T-cell (primary cell): ENCODE measurements at regions of chr3 and their contacts with region 1.

Region 1: GRCh38 chr3:8705575-8705974 is 28.0 kb upstream of the CAV3 start:
- DNase-seq: no peak
- ATAC-seq: no peak
- H3K4me3 ChIP-seq: no peak overlapping the region
- H3K4me3 Mint-ChIP-seq: no peak overlapping the region
- H3K27ac ChIP-seq: no peak overlapping the region
- H3K27ac Mint-ChIP-seq: no peak overlapping the region
- H3K4me1 ChIP-seq: no peaks in the 10 kb centered on the region
- H3K4me1 Mint-ChIP-seq: no peaks in the 10 kb centered on the region
- H3K27me3 ChIP-seq: peaks cover 0 to 2% of the 10 kb centered on the region in 2 experiments
- H3K27me3 Mint-ChIP-seq: peaks cover 0 to 2% of the 10 kb centered on the region in 2 donors

Region 2: GRCh38 chr3:7144696-7145308 is 1560.8 kb before region 1 on chr3:
- CTCF ChIA-PET with region 1: no interaction called
- POLR2A ChIA-PET with region 1: no interaction called
- DNase-seq: no peak
- ATAC-seq: no peak
- H3K4me3 ChIP-seq: no peak overlapping the region
- H3K4me3 Mint-ChIP-seq: no peak overlapping the region
- H3K27ac ChIP-seq: no peak overlapping the region
- H3K27ac Mint-ChIP-seq: no peak overlapping the region
- H3K4me1 ChIP-seq: no peaks in the 10 kb centered on the region
- H3K4me1 Mint-ChIP-seq: no peaks in the 10 kb centered on the region
- H3K27me3 ChIP-seq: no peaks in the 10 kb centered on the region
- H3K27me3 Mint-ChIP-seq: no peaks in the 10 kb centered on the region

Region 3: DNA sequence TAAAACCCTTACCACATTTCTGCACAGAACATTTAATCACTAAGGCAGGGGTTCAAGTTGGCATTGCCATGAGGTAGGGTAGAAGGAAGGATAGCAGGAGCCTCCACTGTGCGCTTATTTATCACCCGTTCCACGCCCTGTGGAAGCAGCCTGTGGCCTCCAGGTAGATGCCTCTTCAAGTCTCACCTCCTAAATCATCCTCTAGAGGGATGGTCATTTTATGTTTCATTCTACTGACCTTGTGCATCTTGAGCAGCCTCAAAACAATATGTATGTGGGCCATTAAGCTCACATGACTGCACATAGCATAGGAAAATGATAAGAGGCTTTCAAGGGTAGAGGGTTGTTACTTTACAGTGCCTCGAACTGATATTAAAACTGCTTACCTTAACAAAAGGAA is 1298.5 kb before region 1 on chr3:
- CTCF ChIA-PET with region 1: no interaction called
- POLR2A ChIA-PET with region 1: no interaction called
- DNase-seq: no peak
- ATAC-seq: no peak
- H3K4me3 ChIP-seq: no peak overlapping the region
- H3K4me3 Mint-ChIP-seq: no peak overlapping the region
- H3K27ac ChIP-seq: no peak overlapping the region
- H3K27ac Mint-ChIP-seq: no peak overlapping the region
- H3K4me1 ChIP-seq: no peaks in the 10 kb centered on the region
- H3K4me1 Mint-ChIP-seq: no peaks in the 10 kb centered on the region
- H3K27me3 ChIP-seq: no peaks in the 10 kb centered on the region
- H3K27me3 Mint-ChIP-seq: no peaks in the 10 kb centered on the region

Region 4: DNA sequence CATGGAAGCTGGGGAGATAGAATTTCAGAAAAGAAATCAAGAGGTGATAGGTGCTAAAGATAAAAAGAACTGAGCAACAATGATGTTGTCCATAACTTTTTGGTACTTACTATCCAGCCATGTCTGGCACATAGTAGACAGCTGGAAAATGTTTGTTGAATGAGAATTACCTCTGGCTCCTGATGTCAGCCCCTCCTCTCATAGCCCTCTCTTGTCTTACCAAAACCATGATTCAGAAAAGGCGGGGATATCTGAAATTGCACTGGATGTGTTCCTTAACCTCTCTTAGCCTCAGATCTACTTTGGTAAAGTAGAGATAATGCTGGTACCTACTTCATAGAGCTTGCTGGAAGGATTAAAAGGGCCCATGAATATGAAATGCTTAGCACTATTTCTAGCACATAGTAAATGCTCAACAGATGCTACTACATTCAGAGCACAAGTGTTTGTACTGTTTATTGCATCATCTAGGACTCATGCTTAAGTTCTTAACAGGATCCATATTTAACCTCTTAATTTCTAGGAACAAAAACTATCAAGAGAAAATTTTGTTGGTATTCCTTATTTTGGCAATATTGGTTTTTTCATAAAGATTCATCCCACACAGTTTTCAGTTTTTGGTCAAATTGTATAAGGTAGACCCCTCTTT is 984.8 kb before region 1 on chr3:
- CTCF ChIA-PET with region 1: no interaction called
- POLR2A ChIA-PET with region 1: interaction called in 1 of 2 experiments, 11 read pairs
- DNase-seq: no peak
- ATAC-seq: no peak
- H3K4me3 ChIP-seq: no peak overlapping the region
- H3K4me3 Mint-ChIP-seq: no peak overlapping the region
- H3K27ac ChIP-seq: no peak overlapping the region
- H3K27ac Mint-ChIP-seq: no peak overlapping the region
- H3K4me1 ChIP-seq: no peaks in the 10 kb centered on the region
- H3K4me1 Mint-ChIP-seq: no peaks in the 10 kb centered on the region
- H3K27me3 ChIP-seq: no peaks in the 10 kb centered on the region
- H3K27me3 Mint-ChIP-seq: peaks cover 0 to 5% of the 10 kb centered on the region in 2 donors

Region 5: DNA sequence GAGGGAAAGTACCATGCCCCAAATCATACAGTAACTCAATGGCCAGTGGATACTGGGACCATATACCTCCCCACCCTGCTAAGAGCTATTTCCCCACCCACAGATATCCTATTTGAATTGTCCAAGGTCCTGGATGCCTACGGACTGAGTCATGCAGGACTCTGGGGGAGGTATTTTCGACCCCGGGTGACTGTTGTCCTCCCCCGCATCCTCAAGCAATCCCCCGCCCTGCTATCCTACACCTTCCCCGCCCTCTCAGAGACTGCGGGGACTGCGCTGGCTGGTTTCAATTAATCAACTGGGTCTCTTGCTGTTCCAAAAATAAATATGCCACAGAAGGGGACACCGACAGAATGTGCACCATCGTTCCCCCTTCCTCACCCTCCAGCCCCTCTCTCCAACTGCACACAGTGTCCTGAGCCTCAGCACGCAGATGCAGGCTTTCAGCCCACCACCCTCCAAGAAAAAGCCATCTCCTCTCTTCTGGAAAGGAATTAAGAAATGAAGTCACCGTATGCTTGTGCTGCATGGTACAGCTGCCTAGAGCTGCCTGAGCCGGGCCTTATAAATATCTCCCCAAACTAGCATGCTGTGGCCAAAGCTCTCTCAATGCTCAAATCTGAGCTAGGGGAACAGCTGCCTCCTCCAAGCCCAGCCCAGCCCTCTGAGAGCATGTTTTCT is 36.1 kb after region 1 on chr3:
- CTCF ChIA-PET with region 1: no interaction called
- POLR2A ChIA-PET with region 1: no interaction called
- DNase-seq: no peak
- ATAC-seq: no peak
- H3K4me3 ChIP-seq: no peak overlapping the region
- H3K4me3 Mint-ChIP-seq: no peak overlapping the region
- H3K27ac ChIP-seq: no peak overlapping the region
- H3K27ac Mint-ChIP-seq: no peak overlapping the region
- H3K4me1 ChIP-seq: no peaks in the 10 kb centered on the region
- H3K4me1 Mint-ChIP-seq: no peaks in the 10 kb centered on the region
- H3K27me3 ChIP-seq: peaks cover 0 to 9% of the 10 kb centered on the region in 2 experiments
- H3K27me3 Mint-ChIP-seq: peaks cover 5 to 7% of the 10 kb centered on the region in 2 donors